Naive thymus-derived CD4-positive, alpha-beta T cell (primary cell): ENCODE measurements at regions of chr16 and their contacts with region 1.

Region 1: GRCh38 chr16:4517812-4518680 is 20.5 kb downstream of the CDIP1 start:
- DNase-seq: no peak
- ATAC-seq: no peak
- H3K4me3 ChIP-seq: no peak overlapping the region
- H3K4me3 Mint-ChIP-seq: no peak overlapping the region
- H3K27ac ChIP-seq: no peak overlapping the region
- H3K27ac Mint-ChIP-seq: peak overlapping the region; percentile 8 to 74 (median 63)
- H3K4me1 ChIP-seq: peaks cover 24 to 30% of the 10 kb centered on the region in 2 donors
- H3K4me1 Mint-ChIP-seq: peaks cover 29 to 68% (median 46%) of the 10 kb centered on the region in 7 donors
- H3K27me3 ChIP-seq: no peaks in the 10 kb centered on the region
- H3K27me3 Mint-ChIP-seq: no peaks in the 10 kb centered on the region

Region 2: DNA sequence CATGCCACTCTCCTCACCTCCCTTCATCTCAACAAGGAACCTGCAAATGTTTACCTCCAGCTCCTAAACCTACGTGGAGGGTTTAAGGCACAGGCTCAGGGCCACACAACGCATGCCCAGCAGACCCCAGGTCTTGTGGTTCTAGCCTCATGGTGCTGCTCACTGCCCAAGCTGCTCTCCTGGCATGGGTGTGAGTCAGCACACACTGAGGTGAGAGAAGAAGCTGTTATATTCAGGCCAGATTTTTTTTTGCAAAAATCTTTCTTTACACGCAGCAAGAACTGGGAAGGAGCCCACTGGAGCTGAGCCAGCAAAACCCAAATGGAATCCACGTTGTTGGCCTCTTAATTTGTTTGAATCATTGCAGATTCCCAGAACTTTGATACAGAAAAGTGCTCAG is 32.5 kb after region 1 on chr16:
- CTCF ChIA-PET with region 1: interaction called, 4 read pairs
- POLR2A ChIA-PET with region 1: no interaction called
- intact Hi-C with region 1: loop called in 1 of 2 experiments (anchors 1 kb)
- DNase-seq: no peak
- ATAC-seq: no peak
- H3K4me3 ChIP-seq: no peak overlapping the region
- H3K4me3 Mint-ChIP-seq: no peak overlapping the region
- H3K27ac ChIP-seq: no peak overlapping the region
- H3K27ac Mint-ChIP-seq: peak overlapping the region in 1 of 9 donors; percentile 36
- H3K4me1 ChIP-seq: peaks cover 0 to 7% of the 10 kb centered on the region in 2 donors
- H3K4me1 Mint-ChIP-seq: peaks cover 0 to 10% (median 5%) of the 10 kb centered on the region in 7 donors
- H3K27me3 ChIP-seq: no peaks in the 10 kb centered on the region
- H3K27me3 Mint-ChIP-seq: peaks cover 0 to 6% (median 0%) of the 10 kb centered on the region in 5 donors

Region 3: GRCh38 chr16:4580245-4580644 is 62.2 kb after region 1 on chr16:
- CTCF ChIA-PET with region 1: interaction called, 4 read pairs
- POLR2A ChIA-PET with region 1: no interaction called
- intact Hi-C with region 1: loop called in 1 of 2 experiments (anchors 1 kb)
- DNase-seq: no peak
- ATAC-seq: no peak
- H3K4me3 ChIP-seq: no peak overlapping the region
- H3K4me3 Mint-ChIP-seq: no peak overlapping the region
- H3K27ac ChIP-seq: no peak overlapping the region
- H3K27ac Mint-ChIP-seq: no peak overlapping the region
- H3K4me1 ChIP-seq: no peaks in the 10 kb centered on the region
- H3K4me1 Mint-ChIP-seq: no peaks in the 10 kb centered on the region
- H3K27me3 ChIP-seq: no peaks in the 10 kb centered on the region
- H3K27me3 Mint-ChIP-seq: no peaks in the 10 kb centered on the region